Esophagus muscularis mucosa (tissue), 4 donors: ENCODE measurements at regions of chr21 and their contacts with region 1.

Region 1: DNA sequence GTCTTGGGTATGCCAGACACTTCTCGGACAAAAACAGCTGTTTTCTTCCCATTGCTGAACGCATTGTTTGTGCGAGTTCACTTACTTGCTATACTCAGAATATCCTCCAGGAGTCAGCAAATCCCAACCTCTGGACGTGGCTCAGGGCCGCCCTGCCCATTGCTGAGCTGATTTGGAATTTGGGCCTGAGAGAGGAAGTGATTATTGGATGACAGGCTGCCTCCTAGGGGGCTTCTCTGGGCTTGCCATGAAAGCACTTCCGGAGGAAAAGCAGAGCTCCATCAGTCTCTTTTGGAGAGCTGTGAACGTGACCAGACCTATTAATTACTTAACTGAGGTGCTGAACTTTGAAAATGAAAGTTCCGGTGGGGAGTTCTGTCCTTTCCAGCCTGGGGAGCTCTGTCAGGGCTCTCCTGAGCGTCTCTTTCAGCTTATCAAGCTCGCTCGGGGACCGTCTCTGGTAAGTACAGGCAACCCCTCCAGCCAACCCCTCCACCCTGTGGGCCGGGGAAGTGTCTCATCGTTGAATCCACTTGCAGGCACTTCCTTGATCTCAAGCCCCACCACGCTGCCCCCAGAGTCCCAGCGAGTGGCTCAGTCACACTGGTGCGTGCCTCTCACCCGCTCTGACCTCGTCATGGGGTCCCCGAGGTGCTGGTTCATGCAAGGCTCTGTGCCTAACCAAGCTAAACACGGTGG is 76.9 kb downstream of the CLIC6 start:
- DNase-seq: no peak
- H3K4me3 ChIP-seq: peak overlapping the region in 1 of 4 donors; percentile 23
- H3K27ac ChIP-seq: no peak overlapping the region
- H3K4me1 ChIP-seq: peaks cover 0 to 11% (median 11%) of the 10 kb centered on the region in 4 donors
- H3K27me3 ChIP-seq: peaks cover 0 to 32% (median 0%) of the 10 kb centered on the region in 4 donors
- CTCF ChIP-seq: peak; percentile 75 to 91 (median 81)
- EP300 ChIP-seq: no peak
- POLR2A ChIP-seq: no peak

Region 2: GRCh38 chr21:35400233-35400957 is 654.7 kb after region 1 on chr21:
- intact Hi-C with region 1: loop called (anchors 5 kb)
- DNase-seq: no peak
- H3K4me3 ChIP-seq: no peak overlapping the region
- H3K27ac ChIP-seq: no peak overlapping the region
- H3K4me1 ChIP-seq: no peaks in the 10 kb centered on the region
- H3K27me3 ChIP-seq: peaks cover 0 to 14% (median 0%) of the 10 kb centered on the region in 4 donors
- CTCF ChIP-seq: peak; percentile 25 to 34 (median 32)
- EP300 ChIP-seq: no peak
- POLR2A ChIP-seq: no peak

Region 3: DNA sequence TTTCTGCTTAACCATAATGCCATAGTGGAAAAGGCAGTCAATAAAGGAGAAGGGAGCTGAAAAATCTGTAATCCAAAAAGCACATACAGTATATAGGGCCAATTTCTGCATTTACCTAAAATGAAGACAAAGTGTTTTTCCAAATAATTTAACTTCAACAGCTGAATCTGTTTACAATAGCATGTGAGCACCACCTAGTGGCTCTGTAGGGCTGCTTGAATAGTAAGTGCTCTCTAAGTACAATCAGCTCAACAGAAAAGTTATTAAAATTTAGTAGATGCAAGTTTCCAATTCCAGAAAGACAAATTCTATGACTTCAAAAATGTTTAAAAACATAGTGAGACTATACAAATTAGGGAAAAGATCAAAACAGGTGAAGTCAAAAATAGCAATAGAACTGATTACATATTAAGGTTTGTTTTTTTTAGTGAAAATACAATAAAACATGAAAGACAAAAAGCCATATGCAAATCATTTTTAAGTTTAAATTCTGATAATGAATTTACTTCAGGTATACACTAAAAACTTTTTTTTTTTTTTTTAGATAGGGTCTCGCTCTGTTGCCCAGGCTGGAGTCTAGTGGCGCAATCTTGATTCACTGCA is 1094.6 kb after region 1 on chr21:
- intact Hi-C with region 1: loop called (anchors 5 kb)
- DNase-seq: no peak
- H3K4me3 ChIP-seq: no peak overlapping the region
- H3K27ac ChIP-seq: no peak overlapping the region
- H3K4me1 ChIP-seq: peaks cover 0 to 3% (median 0%) of the 10 kb centered on the region in 4 donors
- H3K27me3 ChIP-seq: no peaks in the 10 kb centered on the region
- CTCF ChIP-seq: peak; percentile 56 to 76 (median 66)
- EP300 ChIP-seq: no peak
- POLR2A ChIP-seq: no peak

Region 4: GRCh38 chr21:35940074-35940927 is 1194.6 kb after region 1 on chr21:
- intact Hi-C with region 1: loop called (anchors 2 kb)
- DNase-seq: peak; percentile 90
- H3K4me3 ChIP-seq: no peak overlapping the region
- H3K27ac ChIP-seq: no peak overlapping the region
- H3K4me1 ChIP-seq: peaks cover 0 to 5% (median 2%) of the 10 kb centered on the region in 4 donors
- H3K27me3 ChIP-seq: peaks cover 0 to 11% (median 0%) of the 10 kb centered on the region in 4 donors
- CTCF ChIP-seq: peak; percentile 54 to 62 (median 61)
- EP300 ChIP-seq: no peak
- POLR2A ChIP-seq: no peak

Region 5: DNA sequence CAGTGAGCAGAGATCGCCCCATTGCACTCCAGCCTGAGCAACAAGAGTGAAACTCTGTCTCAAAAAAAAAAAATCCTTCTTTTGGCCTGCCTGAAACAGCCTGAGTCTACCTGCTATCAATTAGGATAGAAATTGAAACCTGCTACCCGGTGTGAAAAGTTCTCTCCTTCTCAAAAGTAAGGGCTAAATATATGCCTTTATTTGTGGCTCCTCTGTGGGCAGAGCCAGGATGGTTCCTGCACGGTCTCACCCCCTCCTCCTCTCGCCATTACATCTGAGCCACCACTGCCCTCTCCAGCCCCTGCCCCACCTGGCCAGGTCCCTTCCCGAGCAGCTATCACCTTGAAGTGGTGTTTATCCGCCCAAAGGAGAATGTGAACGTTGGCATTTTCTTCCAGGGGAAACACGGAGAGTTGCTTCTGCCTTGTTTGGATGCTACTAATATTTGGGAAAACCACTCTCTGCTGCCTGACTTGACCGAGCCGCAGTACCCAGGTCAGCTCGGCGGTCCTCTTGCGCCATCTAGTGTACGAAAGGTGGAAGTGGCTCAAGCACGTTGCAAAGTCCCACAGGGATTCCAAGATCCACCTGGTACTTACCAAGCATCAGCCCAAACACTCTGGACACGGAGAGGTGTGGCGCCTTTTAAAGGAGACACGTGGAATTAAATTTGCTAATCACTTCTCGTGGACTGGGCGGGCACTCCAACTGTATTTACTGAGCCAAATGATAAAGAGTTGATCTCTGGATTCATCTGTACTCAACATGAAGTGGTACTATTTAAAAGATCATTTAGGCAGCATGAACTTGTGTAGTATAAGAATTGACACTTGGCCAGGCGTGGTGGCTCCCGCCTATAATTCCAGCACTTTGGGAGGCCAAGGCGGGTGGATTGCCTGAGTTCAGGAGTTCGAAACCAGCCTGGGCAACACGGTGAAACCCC is 1282.7 kb after region 1 on chr21:
- intact Hi-C with region 1: loop called (anchors 2 kb)
- DNase-seq: peak; percentile 94
- H3K4me3 ChIP-seq: no peak overlapping the region
- H3K27ac ChIP-seq: no peak overlapping the region
- H3K4me1 ChIP-seq: peaks cover 0 to 12% (median 8%) of the 10 kb centered on the region in 4 donors
- H3K27me3 ChIP-seq: no peaks in the 10 kb centered on the region
- CTCF ChIP-seq: peak; percentile 91 to 93 (median 93)
- EP300 ChIP-seq: no peak
- POLR2A ChIP-seq: no peak